ENCODE measurements at regions of chr18 and their contacts with region 1.

Region 1: GRCh38 chr18:62584241-62585120 is 61.7 kb downstream of the ZCCHC2 start:
- DNase-seq: peak; percentile 67
- ATAC-seq: peak; percentile 96
- H3K4me3 Mint-ChIP-seq: no peak overlapping the region
- H3K27ac Mint-ChIP-seq: no peak overlapping the region
- H3K4me1 Mint-ChIP-seq: peaks cover 26% of the 10 kb centered on the region
- H3K27me3 Mint-ChIP-seq: no peaks in the 10 kb centered on the region
- CTCF ChIP-seq: no peak

Region 2: GRCh38 chr18:62324917-62325805 is 259.3 kb before region 1 on chr18 and contains the start of gene TNFRSF11A:
- CTCF ChIA-PET with region 1: interaction called, 4 read pairs
- POLR2A ChIA-PET with region 1: no interaction called
- intact Hi-C with region 1: loop called (anchors 1 kb)
- DNase-seq: peak; percentile 61
- ATAC-seq: peak; percentile 93
- H3K4me3 Mint-ChIP-seq: peak within 1 kb of the TSS; percentile 76
- H3K27ac Mint-ChIP-seq: no peak within 1 kb of the TSS
- H3K4me1 Mint-ChIP-seq: peaks cover 21% of the 10 kb centered on the region
- H3K27me3 Mint-ChIP-seq: peaks cover 50% of the 10 kb centered on the region
- CTCF ChIP-seq: no peak
- total RNA-seq, gene TNFRSF11A: 0.07 and 0.24 TPM in 2 replicates

Region 3: DNA sequence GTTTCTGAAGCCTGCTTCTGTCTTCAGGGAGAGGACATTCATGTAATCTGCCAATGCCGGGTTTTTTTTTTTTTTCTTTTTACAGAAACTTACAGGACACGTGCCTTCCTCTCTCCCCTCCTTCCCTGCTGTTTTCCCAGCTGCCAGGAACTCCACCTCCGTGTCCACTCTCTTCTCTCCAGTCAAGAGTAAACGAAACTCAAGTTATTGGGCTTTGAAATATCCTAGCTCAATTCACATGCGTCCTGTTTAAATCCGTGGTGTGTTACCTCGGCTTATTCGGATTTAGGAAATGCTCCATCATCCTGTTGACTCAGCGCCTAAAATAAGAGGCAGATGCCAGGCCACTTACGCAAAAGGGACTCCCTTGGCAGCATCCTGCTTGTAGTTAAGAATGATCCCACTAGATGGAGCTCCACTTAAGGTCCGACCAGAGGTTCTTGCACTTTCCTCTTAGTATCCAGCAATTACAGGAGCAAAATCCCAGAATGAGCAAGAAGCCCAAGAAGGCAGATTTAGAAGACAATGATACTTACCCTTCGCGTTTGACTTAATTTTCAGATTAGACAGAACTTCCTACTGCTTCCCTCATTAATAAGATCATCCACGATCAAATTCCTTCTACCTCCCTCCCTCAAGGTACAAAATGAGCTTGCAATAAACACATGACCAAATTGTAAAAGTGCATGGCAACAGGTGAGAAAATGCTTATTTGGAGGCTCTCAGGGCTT is 158.9 kb before region 1 on chr18:
- CTCF ChIA-PET with region 1: interaction called, 9 read pairs
- POLR2A ChIA-PET with region 1: interaction called, 3 read pairs
- intact Hi-C with region 1: loop called (anchors 1 kb)
- DNase-seq: no peak
- ATAC-seq: no peak
- H3K4me3 Mint-ChIP-seq: no peak overlapping the region
- H3K27ac Mint-ChIP-seq: no peak overlapping the region
- H3K4me1 Mint-ChIP-seq: peaks cover 10% of the 10 kb centered on the region
- H3K27me3 Mint-ChIP-seq: peaks cover 3% of the 10 kb centered on the region
- CTCF ChIP-seq: peak; percentile 50

Region 4: DNA sequence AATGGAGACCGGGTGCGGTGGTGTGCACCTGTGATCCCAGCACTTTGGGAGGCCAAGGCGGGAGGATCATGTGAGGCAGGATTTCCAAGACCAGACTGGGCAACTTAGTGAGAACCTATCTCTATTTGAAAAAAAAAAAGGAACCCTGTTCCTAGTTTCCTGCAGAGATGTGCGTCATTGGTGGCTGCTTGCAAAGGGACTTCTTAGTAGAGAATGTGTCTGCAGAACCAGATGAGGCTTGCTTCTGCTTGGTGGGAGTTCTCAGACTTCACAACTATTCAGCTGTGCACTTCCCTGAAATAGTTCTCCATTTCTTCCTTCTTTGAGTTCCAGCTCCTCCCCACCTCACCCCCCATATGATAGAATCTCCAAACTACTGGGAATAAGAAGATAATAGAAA is 39.4 kb before region 1 on chr18:
- CTCF ChIA-PET with region 1: no interaction called
- POLR2A ChIA-PET with region 1: no interaction called
- intact Hi-C with region 1: no loop called
- DNase-seq: no peak
- ATAC-seq: no peak
- H3K4me3 Mint-ChIP-seq: no peak overlapping the region
- H3K27ac Mint-ChIP-seq: no peak overlapping the region
- H3K4me1 Mint-ChIP-seq: no peaks in the 10 kb centered on the region
- H3K27me3 Mint-ChIP-seq: no peaks in the 10 kb centered on the region
- CTCF ChIP-seq: no peak

Region 5: GRCh38 chr18:62957885-62958472 is 373.5 kb after region 1 on chr18:
- CTCF ChIA-PET with region 1: interaction called, 3 read pairs
- POLR2A ChIA-PET with region 1: no interaction called
- intact Hi-C with region 1: loop called (anchors 1 kb)
- DNase-seq: no peak
- ATAC-seq: peak; percentile 77
- H3K4me3 Mint-ChIP-seq: no peak overlapping the region
- H3K27ac Mint-ChIP-seq: no peak overlapping the region
- H3K4me1 Mint-ChIP-seq: no peaks in the 10 kb centered on the region
- H3K27me3 Mint-ChIP-seq: no peaks in the 10 kb centered on the region
- CTCF ChIP-seq: no peak

Region 6: GRCh38 chr18:63367053-63367953 is 782.8 kb after region 1 on chr18 and contains the start of gene KDSR:
- CTCF ChIA-PET with region 1: no interaction called
- POLR2A ChIA-PET with region 1: no interaction called
- intact Hi-C with region 1: loop called (anchors 5 kb)
- DNase-seq: peak; percentile 88
- ATAC-seq: peak; percentile 92
- H3K4me3 Mint-ChIP-seq: peak within 1 kb of the TSS; percentile 88
- H3K27ac Mint-ChIP-seq: peak within 1 kb of the TSS; percentile 71
- H3K4me1 Mint-ChIP-seq: peaks cover 23% of the 10 kb centered on the region
- H3K27me3 Mint-ChIP-seq: no peaks in the 10 kb centered on the region
- CTCF ChIP-seq: no peak
- total RNA-seq, gene KDSR: 15.0 and 15.3 TPM in 2 replicates